Posterior vena cava (tissue), 2 donors: ENCODE measurements at regions of chr13 and their contacts with region 1.

Region 1: GRCh38 chr13:108889324-108889984 is 260.0 kb downstream of the MYO16 start:
- DNase-seq: no peak

Region 2: GRCh38 chr13:107365466-107366215 is 1523.8 kb before region 1 on chr13:
- intact Hi-C with region 1: loop called in 1 of 2 experiments (anchors 10 kb)
- DNase-seq: no peak

Region 3: GRCh38 chr13:108681986-108682575 is 207.4 kb before region 1 on chr13:
- intact Hi-C with region 1: no loop called
- DNase-seq: no peak